ENCODE measurements at regions of chr2 and their contacts with region 1.

Region 1: GRCh38 chr2:28894470-28895177 is at the start of gene WDR43:
- DNase-seq: peak; percentile 97
- ATAC-seq: peak; percentile 98
- H3K4me3 Mint-ChIP-seq: peak within 1 kb of the TSS; percentile 100
- H3K27ac Mint-ChIP-seq: peak within 1 kb of the TSS; percentile 98
- H3K4me1 Mint-ChIP-seq: peaks cover 30% of the 10 kb centered on the region
- H3K27me3 Mint-ChIP-seq: no peaks in the 10 kb centered on the region
- CTCF ChIP-seq: no peak
- total RNA-seq, gene WDR43: 121 to 129 TPM

Region 2: DNA sequence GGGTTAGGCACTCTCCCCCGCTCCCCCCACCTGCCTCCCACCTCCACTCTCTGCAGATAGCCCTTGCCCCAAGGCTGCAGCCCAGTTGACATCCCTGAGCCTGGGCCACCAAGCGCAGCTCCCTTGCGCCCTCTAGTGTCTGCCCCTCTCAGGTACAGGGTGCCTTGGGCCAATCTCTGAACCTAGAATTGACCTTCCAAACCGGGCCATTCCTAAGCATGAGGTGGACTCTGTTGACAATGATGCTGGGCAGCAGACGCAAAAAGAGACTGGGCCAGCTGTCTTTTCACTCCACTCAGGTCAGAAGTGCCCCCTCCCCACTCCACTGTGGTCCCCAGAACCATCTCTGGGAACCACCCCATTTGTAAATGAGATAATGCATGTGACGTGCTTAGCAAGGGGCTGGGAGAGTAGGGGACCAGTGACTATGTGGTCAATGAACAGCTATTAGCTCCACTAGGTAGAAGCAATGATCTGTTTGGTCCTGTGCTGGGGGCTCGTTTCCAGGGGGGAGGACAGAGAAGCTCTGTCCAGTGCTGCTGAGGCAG is 442.0 kb before region 1 on chr2:
- CTCF ChIA-PET with region 1: no interaction called
- POLR2A ChIA-PET with region 1: no interaction called
- intact Hi-C with region 1: no loop called
- DNase-seq: peak; percentile 91
- ATAC-seq: peak; percentile 72
- H3K4me3 Mint-ChIP-seq: no peak overlapping the region
- H3K27ac Mint-ChIP-seq: no peak overlapping the region
- H3K4me1 Mint-ChIP-seq: peaks cover 41% of the 10 kb centered on the region
- H3K27me3 Mint-ChIP-seq: no peaks in the 10 kb centered on the region
- CTCF ChIP-seq: peak; percentile 96

Region 3: DNA sequence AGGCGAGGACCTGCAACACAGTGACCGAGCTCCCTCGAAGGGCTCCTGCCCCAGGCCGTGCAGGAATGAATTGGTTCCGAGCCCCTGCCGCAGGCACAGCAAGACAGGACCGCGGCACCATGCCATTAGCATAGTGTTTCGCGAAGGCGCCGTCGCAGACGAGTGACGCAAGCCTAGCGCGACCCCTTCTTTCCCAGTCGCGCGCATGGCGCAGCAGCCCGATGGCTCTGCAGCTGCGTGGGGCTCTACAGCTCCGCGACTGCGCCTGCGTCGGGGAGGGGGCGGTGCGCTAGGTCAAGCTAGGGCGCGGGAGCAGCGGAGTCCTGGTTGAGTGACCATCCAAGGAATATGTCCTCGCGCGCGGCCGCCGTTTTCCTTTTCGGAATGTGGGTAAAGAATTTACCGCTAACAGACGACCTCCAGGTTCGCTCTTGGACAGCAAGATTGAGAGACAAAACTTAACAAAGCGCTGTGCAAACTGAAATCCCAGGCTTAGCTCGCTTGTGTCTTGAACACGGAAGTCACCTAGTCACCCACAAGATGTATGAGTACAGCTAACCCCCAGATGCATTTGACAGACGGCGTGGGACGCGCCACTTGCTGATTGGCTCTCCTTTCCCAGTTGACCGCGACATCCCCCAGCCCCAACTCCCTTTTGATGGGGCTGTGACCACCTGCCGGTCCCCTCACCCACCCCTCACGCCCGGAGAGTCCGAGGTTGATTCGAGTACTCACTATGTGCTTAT is 24.3 kb before region 1 on chr2 and contains the start of gene TRMT61B:
- CTCF ChIA-PET with region 1: interaction called, 14 read pairs
- POLR2A ChIA-PET with region 1: interaction called, 30 read pairs
- intact Hi-C with region 1: no loop called
- DNase-seq: peak; percentile 98
- ATAC-seq: peak; percentile 99
- H3K4me3 Mint-ChIP-seq: peak within 1 kb of the TSS; percentile 96
- H3K27ac Mint-ChIP-seq: peak within 1 kb of the TSS; percentile 96
- H3K4me1 Mint-ChIP-seq: peaks cover 24% of the 10 kb centered on the region
- H3K27me3 Mint-ChIP-seq: no peaks in the 10 kb centered on the region
- CTCF ChIP-seq: no peak
- total RNA-seq, gene TRMT61B: 14.5 to 19.3 TPM

Region 4: DNA sequence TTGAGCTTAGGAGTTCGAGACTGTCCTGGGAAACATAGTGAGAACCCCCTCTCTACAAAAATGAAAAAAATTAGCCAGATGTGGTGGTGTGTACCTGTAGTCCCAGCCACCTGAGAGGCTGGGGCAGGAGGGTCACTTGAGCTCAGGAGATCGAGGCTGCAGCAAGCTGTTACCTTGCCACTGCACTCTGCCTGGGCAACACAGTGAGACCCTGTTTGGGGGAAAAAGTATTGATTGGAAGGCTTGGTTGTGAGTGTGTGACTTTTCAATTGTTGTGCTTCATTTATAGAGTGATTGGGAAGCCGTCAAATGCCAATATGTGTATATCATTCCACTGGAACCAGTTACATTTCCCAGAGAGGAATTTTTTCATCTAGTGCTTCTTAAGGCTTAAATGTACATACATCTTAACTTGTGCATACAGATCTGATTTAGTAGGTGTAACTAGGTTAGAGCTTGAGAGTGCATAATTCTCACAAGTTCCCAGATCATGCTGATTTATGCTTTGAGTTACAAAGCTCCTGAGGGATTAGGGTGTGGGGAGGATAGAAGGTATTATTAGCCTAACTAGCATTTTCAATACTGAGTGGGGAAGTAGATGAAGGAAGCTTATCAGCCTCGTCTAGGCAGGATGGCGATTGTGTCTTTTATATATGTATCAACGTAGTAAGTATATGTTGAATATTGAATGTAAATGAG is 15.2 kb after region 1 on chr2:
- CTCF ChIA-PET with region 1: interaction called, 3 read pairs
- POLR2A ChIA-PET with region 1: interaction called, 30 read pairs
- intact Hi-C with region 1: no loop called
- DNase-seq: no peak
- ATAC-seq: no peak
- H3K4me3 Mint-ChIP-seq: no peak overlapping the region
- H3K27ac Mint-ChIP-seq: no peak overlapping the region
- H3K4me1 Mint-ChIP-seq: peaks cover 17% of the 10 kb centered on the region
- H3K27me3 Mint-ChIP-seq: no peaks in the 10 kb centered on the region
- CTCF ChIP-seq: no peak

Region 5: DNA sequence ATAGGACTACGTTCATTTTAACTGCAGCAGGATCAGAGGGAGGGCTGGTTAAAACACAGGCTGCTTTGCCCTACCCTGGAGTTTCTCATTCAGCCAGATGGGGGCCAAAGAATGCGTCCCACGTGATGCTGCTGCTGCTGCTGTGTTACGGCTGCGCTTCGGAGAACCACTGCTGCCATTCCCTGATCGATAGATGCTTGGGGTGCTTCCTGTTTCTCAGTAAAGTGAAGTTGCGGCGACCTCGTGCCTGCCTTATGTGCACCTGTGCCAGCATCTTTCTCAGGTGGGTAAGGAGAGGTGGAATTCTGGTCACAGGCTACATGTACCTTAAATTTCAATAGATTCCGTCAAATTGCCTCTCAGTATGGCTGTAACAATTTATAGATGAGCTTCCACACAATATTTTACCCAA is 61.8 kb after region 1 on chr2:
- CTCF ChIA-PET with region 1: no interaction called
- POLR2A ChIA-PET with region 1: no interaction called
- intact Hi-C with region 1: no loop called
- DNase-seq: peak; percentile 72
- ATAC-seq: peak; percentile 88
- H3K4me3 Mint-ChIP-seq: peak overlapping the region; percentile 65
- H3K27ac Mint-ChIP-seq: no peak overlapping the region
- H3K4me1 Mint-ChIP-seq: peaks cover 7% of the 10 kb centered on the region
- H3K27me3 Mint-ChIP-seq: no peaks in the 10 kb centered on the region
- CTCF ChIP-seq: no peak

Measured in activated CD8-positive, alpha-beta T cell treated with anti-CD3 and anti-CD28 coated beads for 36 hours (primary cell).